ENCODE measurements at regions of chr3 and their contacts with region 1.

Region 1: GRCh38 chr3:139389458-139390209 is at the start of gene COPB2:
- DNase-seq: peak; percentile 97
- ATAC-seq: peak; percentile 96
- H3K4me3 ChIP-seq: peak within 1 kb of the TSS; percentile 87 to 97 (median 91)
- H3K27ac ChIP-seq: peak within 1 kb of the TSS; percentile 98
- H3K4me1 ChIP-seq: peaks cover 37% of the 10 kb centered on the region
- H3K27me3 ChIP-seq: no peaks in the 10 kb centered on the region; a peak in 1 of 5 replicates
- CTCF ChIP-seq: no peak
- EP300 ChIP-seq: 0 out of 4 replicates have a peak, but pooled peaks of 1 of the 2 experiments have one; percentile 7
- POLR2A ChIP-seq: peak; percentile 83 to 92
- RAD21 ChIP-seq: peak; percentile 63
- total RNA-seq, gene COPB2: 217 and 344 TPM in 2 replicates

Region 2: DNA sequence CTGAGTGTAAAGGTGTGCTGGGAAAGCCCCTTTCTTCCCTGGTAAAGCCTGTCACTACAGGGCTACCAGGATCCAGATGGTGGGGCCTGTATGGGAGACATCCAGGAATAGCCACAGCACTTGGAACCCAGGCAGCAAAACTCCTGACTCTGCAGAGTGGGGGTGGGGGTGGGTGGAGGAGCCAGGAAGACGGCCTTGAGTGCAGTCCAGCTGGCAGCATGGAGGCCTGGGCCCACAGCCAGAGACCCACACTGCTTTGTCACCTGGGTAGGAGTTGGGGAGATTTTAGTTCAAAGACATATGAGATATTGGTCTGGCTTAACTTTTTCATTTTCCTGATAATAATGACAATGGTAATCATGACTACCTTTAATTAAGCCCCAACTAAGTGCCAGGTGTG is 162.5 kb before region 1 on chr3:
- CTCF ChIA-PET with region 1: no interaction called
- POLR2A ChIA-PET with region 1: no interaction called
- in situ Hi-C with region 1: no loop called
- intact Hi-C with region 1: no loop called
- DNase-seq: no peak
- ATAC-seq: no peak
- H3K4me3 ChIP-seq: no peak overlapping the region
- H3K27ac ChIP-seq: no peak overlapping the region
- H3K4me1 ChIP-seq: peaks cover 6% of the 10 kb centered on the region; the same call in 1 of the 2 replicates
- H3K27me3 ChIP-seq: no peaks in the 10 kb centered on the region
- CTCF ChIP-seq: no peak
- EP300 ChIP-seq: no peak
- POLR2A ChIP-seq: no peak
- RAD21 ChIP-seq: no peak

Region 3: GRCh38 chr3:139353920-139354556 is 35.6 kb before region 1 on chr3:
- CTCF ChIA-PET with region 1: no interaction called
- POLR2A ChIA-PET with region 1: interaction called, 16 read pairs
- in situ Hi-C with region 1: no loop called
- intact Hi-C with region 1: no loop called
- DNase-seq: peak; percentile 62
- ATAC-seq: peak; percentile 97
- H3K4me3 ChIP-seq: no peak overlapping the region
- H3K27ac ChIP-seq: no peak overlapping the region
- H3K4me1 ChIP-seq: no peaks in the 10 kb centered on the region
- H3K27me3 ChIP-seq: no peaks in the 10 kb centered on the region
- CTCF ChIP-seq: peak; percentile 67
- EP300 ChIP-seq: no peak
- POLR2A ChIP-seq: no peak
- RAD21 ChIP-seq: no peak

Region 4: GRCh38 chr3:139794469-139795265 is 405.0 kb after region 1 on chr3:
- CTCF ChIA-PET with region 1: no interaction called
- POLR2A ChIA-PET with region 1: no interaction called
- in situ Hi-C with region 1: no loop called
- intact Hi-C with region 1: no loop called
- DNase-seq: no peak
- ATAC-seq: no peak
- H3K4me3 ChIP-seq: no peak overlapping the region
- H3K27ac ChIP-seq: no peak overlapping the region
- H3K4me1 ChIP-seq: no peaks in the 10 kb centered on the region
- H3K27me3 ChIP-seq: no peaks in the 10 kb centered on the region
- CTCF ChIP-seq: no peak
- EP300 ChIP-seq: no peak
- POLR2A ChIP-seq: no peak
- RAD21 ChIP-seq: no peak

Measured in HepG2 (cell line).